ENCODE measurements at regions of chr3 and their contacts with region 1.

Region 1: GRCh38 chr3:33787328-33788009 is 11.0 kb upstream of the PDCD6IP start:
- DNase-seq: peak; percentile 62
- H3K4me3 Mint-ChIP-seq: no peak overlapping the region
- H3K27ac Mint-ChIP-seq: no peak overlapping the region
- H3K4me1 Mint-ChIP-seq: peaks cover 16% of the 10 kb centered on the region
- H3K27me3 Mint-ChIP-seq: peaks cover 13% of the 10 kb centered on the region

Region 2: GRCh38 chr3:33131331-33132018 is 656.0 kb before region 1 on chr3:
- CTCF ChIA-PET with region 1: interaction called, 23 read pairs
- POLR2A ChIA-PET with region 1: no interaction called
- DNase-seq: peak; percentile 40
- H3K4me3 Mint-ChIP-seq: no peak overlapping the region
- H3K27ac Mint-ChIP-seq: no peak overlapping the region
- H3K4me1 Mint-ChIP-seq: peaks cover 4% of the 10 kb centered on the region
- H3K27me3 Mint-ChIP-seq: no peaks in the 10 kb centered on the region

Region 3: GRCh38 chr3:33372218-33373081 is 415.0 kb before region 1 on chr3:
- CTCF ChIA-PET with region 1: interaction called, 18 read pairs
- POLR2A ChIA-PET with region 1: no interaction called
- DNase-seq: peak; percentile 47
- H3K4me3 Mint-ChIP-seq: no peak overlapping the region
- H3K27ac Mint-ChIP-seq: no peak overlapping the region
- H3K4me1 Mint-ChIP-seq: peaks cover 5% of the 10 kb centered on the region
- H3K27me3 Mint-ChIP-seq: peaks cover 5% of the 10 kb centered on the region

Region 4: DNA sequence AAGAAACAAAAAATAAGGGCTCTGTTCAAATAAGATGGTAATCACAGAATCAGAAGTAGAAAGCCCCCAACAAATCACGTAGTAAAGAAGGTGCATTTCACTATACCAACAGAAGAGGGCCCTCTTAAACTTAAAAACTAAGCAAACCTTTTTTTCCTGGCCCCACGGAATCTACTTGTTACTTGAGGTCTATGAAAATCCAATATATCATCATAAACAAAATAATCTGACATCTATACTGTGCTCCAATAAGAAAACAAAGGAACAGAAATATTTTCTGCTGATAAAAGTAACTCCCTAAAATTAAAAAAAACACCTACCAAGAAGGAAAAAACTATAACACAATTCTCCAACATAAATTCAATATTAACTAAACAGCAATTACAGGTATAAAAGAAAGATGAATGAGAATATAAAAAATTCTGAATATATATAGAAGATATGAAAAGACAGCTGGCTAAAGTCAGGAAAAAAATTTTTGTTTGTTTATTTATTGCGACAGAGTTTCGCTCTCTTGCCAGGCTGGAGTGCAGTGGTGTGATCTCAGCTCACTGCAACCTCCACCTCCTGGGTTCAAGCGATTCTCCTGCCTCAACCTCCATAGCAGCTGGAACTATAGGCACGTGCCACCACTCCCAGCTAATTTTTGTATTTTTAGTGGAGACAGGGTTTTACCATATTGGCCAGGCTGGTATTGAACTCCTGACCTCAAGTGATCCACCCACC is 151.2 kb before region 1 on chr3:
- CTCF ChIA-PET with region 1: interaction called, 33 read pairs
- POLR2A ChIA-PET with region 1: no interaction called
- DNase-seq: no peak
- H3K4me3 Mint-ChIP-seq: no peak overlapping the region
- H3K27ac Mint-ChIP-seq: no peak overlapping the region
- H3K4me1 Mint-ChIP-seq: no peaks in the 10 kb centered on the region
- H3K27me3 Mint-ChIP-seq: no peaks in the 10 kb centered on the region

Region 5: DNA sequence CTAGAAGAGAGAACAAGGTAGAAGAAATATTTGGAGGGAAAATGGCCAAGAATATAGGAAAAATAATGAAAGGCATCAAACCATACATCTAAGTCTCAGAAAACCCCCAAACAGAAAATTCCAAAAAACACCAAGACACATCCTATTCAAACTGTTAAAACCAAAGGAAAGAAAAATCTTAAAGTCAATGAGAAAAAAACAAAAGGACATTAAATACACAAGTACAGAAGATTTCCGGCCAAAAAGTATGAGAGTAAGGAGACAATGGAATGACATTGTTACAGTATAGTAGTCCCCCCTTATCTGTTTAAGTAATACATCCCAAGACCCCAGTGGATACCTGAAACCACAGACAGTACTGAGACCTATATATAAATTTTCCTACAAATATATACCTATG is 88.2 kb before region 1 on chr3:
- CTCF ChIA-PET with region 1: no interaction called
- POLR2A ChIA-PET with region 1: no interaction called
- DNase-seq: no peak
- H3K4me3 Mint-ChIP-seq: no peak overlapping the region
- H3K27ac Mint-ChIP-seq: no peak overlapping the region
- H3K4me1 Mint-ChIP-seq: peaks cover 2% of the 10 kb centered on the region
- H3K27me3 Mint-ChIP-seq: no peaks in the 10 kb centered on the region

Region 6: DNA sequence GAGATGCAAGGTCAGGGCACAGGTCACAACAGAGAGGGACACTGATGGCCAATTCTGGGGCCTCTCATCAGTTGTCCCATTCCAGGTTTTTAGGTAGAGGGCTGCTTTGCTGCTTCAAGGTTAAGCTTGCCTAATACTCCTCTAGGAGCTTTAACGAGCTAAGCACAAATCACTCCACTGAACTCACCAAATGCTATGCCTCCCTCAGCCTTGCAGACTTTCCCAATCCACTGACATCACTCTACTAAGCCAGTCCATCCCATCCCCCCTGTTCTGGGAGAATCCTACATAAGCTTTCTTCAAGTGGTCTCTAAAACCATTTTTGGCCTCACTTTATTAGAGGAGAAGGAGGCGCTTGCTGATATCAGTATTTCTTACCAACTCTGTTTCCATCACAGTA is 13.8 kb before region 1 on chr3:
- CTCF ChIA-PET with region 1: interaction called, 70 read pairs
- POLR2A ChIA-PET with region 1: interaction called, 4 read pairs
- DNase-seq: no peak
- H3K4me3 Mint-ChIP-seq: no peak overlapping the region
- H3K27ac Mint-ChIP-seq: no peak overlapping the region
- H3K4me1 Mint-ChIP-seq: no peaks in the 10 kb centered on the region
- H3K27me3 Mint-ChIP-seq: no peaks in the 10 kb centered on the region

Region 7: GRCh38 chr3:33798411-33799201 is 11.1 kb after region 1 on chr3 and contains the start of gene PDCD6IP:
- CTCF ChIA-PET with region 1: interaction called, 52 read pairs
- POLR2A ChIA-PET with region 1: interaction called, 8 read pairs
- DNase-seq: peak; percentile 91
- H3K4me3 Mint-ChIP-seq: peak within 1 kb of the TSS; percentile 84
- H3K27ac Mint-ChIP-seq: peak within 1 kb of the TSS; percentile 83
- H3K4me1 Mint-ChIP-seq: peaks cover 53% of the 10 kb centered on the region
- H3K27me3 Mint-ChIP-seq: peaks cover 5% of the 10 kb centered on the region
- total RNA-seq, gene PDCD6IP: 211 TPM

Measured in activated CD4-positive, alpha-beta memory T cell treated with anti-CD3 and anti-CD28 coated beads, Interleukin-2, amount 10 ng/mL, durations not matched to agents 7 days and 5 days (primary cell).